ENCODE measurements at regions of chr6 and their contacts with region 1.

Region 1: GRCh38 chr6:169701954-169702839 is at the starts of genes C6orf120 and WDR27:
- DNase-seq: peak; percentile 96 to 97 (median 96)
- H3K4me3 ChIP-seq: peak within 1 kb of the TSS; percentile 63 to 95 (median 84)
- H3K4me3 Mint-ChIP-seq: peak within 1 kb of the TSS; percentile 92 to 94
- H3K27ac ChIP-seq: peak within 1 kb of the TSS; percentile 83 to 94
- H3K27ac Mint-ChIP-seq: peak within 1 kb of the TSS; percentile 85 to 93 (median 89)
- H3K4me1 ChIP-seq: peaks cover 32 to 43% of the 10 kb centered on the region in 2 donors
- H3K4me1 Mint-ChIP-seq: peaks cover 43% of the 10 kb centered on the region
- H3K27me3 ChIP-seq: no peaks in the 10 kb centered on the region
- H3K27me3 Mint-ChIP-seq: no peaks in the 10 kb centered on the region
- CTCF ChIP-seq: no peak
- polyA plus RNA-seq, gene C6orf120: 8.3 to 31.4 (median 28.5) TPM
- polyA plus RNA-seq, gene WDR27: 0.95 to 20.5 (median 2.0) TPM

Region 2: GRCh38 chr6:169212897-169213813 is 489.0 kb before region 1 on chr6:
- intact Hi-C with region 1: loop called in 1 of 2 experiments (anchors 10 kb)
- DNase-seq: peak; percentile 93 to 96 (median 94)
- H3K4me3 ChIP-seq: peak overlapping the region; percentile 21 to 63 (median 23)
- H3K4me3 Mint-ChIP-seq: peak overlapping the region; percentile 58 to 77
- H3K27ac ChIP-seq: peak overlapping the region; percentile 80 to 88
- H3K27ac Mint-ChIP-seq: peak overlapping the region; percentile 88 to 97 (median 93)
- H3K4me1 ChIP-seq: peaks cover 28 to 33% of the 10 kb centered on the region in 2 donors
- H3K4me1 Mint-ChIP-seq: peaks cover 28% of the 10 kb centered on the region
- H3K27me3 ChIP-seq: no peaks in the 10 kb centered on the region
- H3K27me3 Mint-ChIP-seq: peaks cover 0 to 2% (median 0%) of the 10 kb centered on the region in 3 donors
- CTCF ChIP-seq: peak; percentile 35

Region 3: GRCh38 chr6:169723200-169723909 is 21.2 kb after region 1 on chr6:
- intact Hi-C with region 1: loop called (anchors 2 kb)
- DNase-seq: peak; percentile 27 to 32 (median 28)
- H3K4me3 ChIP-seq: peak overlapping the region; percentile 68 to 85 (median 81)
- H3K4me3 Mint-ChIP-seq: peak overlapping the region; percentile 95
- H3K27ac ChIP-seq: peak overlapping the region; percentile 29 to 77
- H3K27ac Mint-ChIP-seq: peak overlapping the region; percentile 14 to 95 (median 82)
- H3K4me1 ChIP-seq: peaks cover 27 to 42% of the 10 kb centered on the region in 2 donors
- H3K4me1 Mint-ChIP-seq: peaks cover 36% of the 10 kb centered on the region
- H3K27me3 ChIP-seq: peaks cover 0 to 8% of the 10 kb centered on the region in 2 donors
- H3K27me3 Mint-ChIP-seq: peaks cover 0 to 12% (median 5%) of the 10 kb centered on the region in 3 donors
- CTCF ChIP-seq: no peak

Region 4: GRCh38 chr6:169751242-169752073 is 49.3 kb after region 1 on chr6 and contains the starts of genes DYNLT2 and ERMARD:
- intact Hi-C with region 1: loop called (anchors 2 to 5 kb)
- DNase-seq: peak; percentile 88 to 92 (median 92)
- H3K4me3 ChIP-seq: peak within 1 kb of the TSS; percentile 51 to 95 (median 84)
- H3K4me3 Mint-ChIP-seq: peak within 1 kb of the TSS; percentile 94 to 99
- H3K27ac ChIP-seq: peak within 1 kb of the TSS; percentile 87 to 94
- H3K27ac Mint-ChIP-seq: peak within 1 kb of the TSS; percentile 97 to 100 (median 98)
- H3K4me1 ChIP-seq: peaks cover 17 to 18% of the 10 kb centered on the region in 2 donors
- H3K4me1 Mint-ChIP-seq: peaks cover 26% of the 10 kb centered on the region
- H3K27me3 ChIP-seq: no peaks in the 10 kb centered on the region
- H3K27me3 Mint-ChIP-seq: peaks cover 0 to 3% (median 0%) of the 10 kb centered on the region in 3 donors
- CTCF ChIP-seq: peak; percentile 21
- polyA plus RNA-seq, gene DYNLT2: 0.19 to 1.5 (median 0.86) TPM
- polyA plus RNA-seq, gene ERMARD: 10.6 to 33.0 (median 11.2) TPM

Region 5: DNA sequence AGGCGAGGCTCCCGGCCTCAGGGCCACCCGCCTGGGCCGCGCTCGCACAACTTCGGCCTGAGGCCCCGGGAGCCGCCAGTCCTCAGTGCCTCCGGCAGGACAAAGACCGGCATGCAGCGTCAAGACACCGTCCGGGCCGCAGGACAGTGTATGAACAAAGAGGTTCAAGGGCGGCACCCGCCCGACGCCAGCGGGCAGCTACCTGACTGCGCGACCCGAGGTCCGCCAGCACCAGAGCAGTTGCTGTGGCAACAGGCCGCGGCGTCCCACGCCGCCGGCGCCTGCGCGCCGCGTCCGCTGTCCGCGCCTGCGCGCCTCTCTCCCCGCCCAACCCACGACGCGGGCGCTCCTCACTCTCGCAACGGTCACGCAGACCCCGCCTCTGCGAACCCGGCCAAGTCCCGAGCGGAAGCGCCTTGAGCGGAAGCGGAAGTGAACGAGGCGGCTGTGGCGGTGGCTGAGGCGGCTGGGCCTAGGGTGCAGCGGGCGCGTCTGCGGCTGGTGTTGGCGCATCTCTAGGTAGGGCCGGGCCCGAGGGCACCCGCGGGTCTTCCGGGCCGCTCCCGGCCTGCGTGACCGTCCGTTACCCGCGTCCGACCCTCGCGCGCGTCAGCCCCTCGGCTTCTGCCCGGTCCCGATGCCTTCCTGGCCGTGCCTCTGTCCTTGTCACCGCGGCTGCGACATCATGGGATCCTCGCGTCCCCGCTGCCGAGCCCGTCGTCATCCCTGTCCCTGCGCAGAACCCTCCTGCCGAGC is 604.3 kb after region 1 on chr6 and contains the start of gene FAM120B:
- intact Hi-C with region 1: loop called in 1 of 2 experiments (anchors 5 kb)
- DNase-seq: peak; percentile 96 to 98 (median 97)
- H3K4me3 ChIP-seq: peak within 1 kb of the TSS; percentile 79 to 89 (median 83)
- H3K4me3 Mint-ChIP-seq: peak within 1 kb of the TSS; percentile 89 to 99
- H3K27ac ChIP-seq: peak within 1 kb of the TSS; percentile 90 to 99
- H3K27ac Mint-ChIP-seq: peak within 1 kb of the TSS; percentile 96 to 99 (median 99)
- H3K4me1 ChIP-seq: peaks cover 24 to 28% of the 10 kb centered on the region in 2 donors
- H3K4me1 Mint-ChIP-seq: peaks cover 45% of the 10 kb centered on the region
- H3K27me3 ChIP-seq: peaks cover 4 to 5% of the 10 kb centered on the region in 2 donors
- H3K27me3 Mint-ChIP-seq: peaks cover 12 to 19% (median 18%) of the 10 kb centered on the region in 3 donors
- CTCF ChIP-seq: no peak
- polyA plus RNA-seq, gene FAM120B: 10.6 to 20.2 (median 11.2) TPM

Region 6: GRCh38 chr6:170554013-170554795 is 852.0 kb after region 1 on chr6 and contains the start of gene TBP:
- intact Hi-C with region 1: loop called (anchors 5 kb)
- DNase-seq: peak; percentile 98 to 99 (median 99)
- H3K4me3 ChIP-seq: peak within 1 kb of the TSS; percentile 71 to 90 (median 89)
- H3K4me3 Mint-ChIP-seq: no peak within 1 kb of the TSS
- H3K27ac ChIP-seq: peak within 1 kb of the TSS; percentile 96
- H3K27ac Mint-ChIP-seq: no peak within 1 kb of the TSS
- H3K4me1 ChIP-seq: peaks cover 22 to 26% of the 10 kb centered on the region in 2 donors
- H3K4me1 Mint-ChIP-seq: peaks cover 13% of the 10 kb centered on the region
- H3K27me3 ChIP-seq: no peaks in the 10 kb centered on the region
- H3K27me3 Mint-ChIP-seq: no peaks in the 10 kb centered on the region
- CTCF ChIP-seq: no peak
- polyA plus RNA-seq, gene TBP: 7.3 to 14.5 (median 14.4) TPM

Measured in CD14-positive monocyte (primary cell).